ENCODE measurements at regions of chr9 and their contacts with region 1.

Region 1: GRCh38 chr9:79012561-79012960 is 559.2 kb upstream of the TLE4 start:
- DNase-seq: no peak
- H3K4me3 ChIP-seq: no peak overlapping the region
- CTCF ChIP-seq: no peak

Region 2: GRCh38 chr9:79023134-79023577 is 10.6 kb after region 1 on chr9:
- CTCF ChIA-PET with region 1: interaction called, 4 read pairs
- POLR2A ChIA-PET with region 1: interaction called, 10 read pairs
- DNase-seq: peak; percentile 92
- H3K4me3 ChIP-seq: no peak overlapping the region
- CTCF ChIP-seq: no peak

Measured in AG04449 (cell line).